ENCODE measurements at regions of chr2 and their contacts with region 1.

Region 1: DNA sequence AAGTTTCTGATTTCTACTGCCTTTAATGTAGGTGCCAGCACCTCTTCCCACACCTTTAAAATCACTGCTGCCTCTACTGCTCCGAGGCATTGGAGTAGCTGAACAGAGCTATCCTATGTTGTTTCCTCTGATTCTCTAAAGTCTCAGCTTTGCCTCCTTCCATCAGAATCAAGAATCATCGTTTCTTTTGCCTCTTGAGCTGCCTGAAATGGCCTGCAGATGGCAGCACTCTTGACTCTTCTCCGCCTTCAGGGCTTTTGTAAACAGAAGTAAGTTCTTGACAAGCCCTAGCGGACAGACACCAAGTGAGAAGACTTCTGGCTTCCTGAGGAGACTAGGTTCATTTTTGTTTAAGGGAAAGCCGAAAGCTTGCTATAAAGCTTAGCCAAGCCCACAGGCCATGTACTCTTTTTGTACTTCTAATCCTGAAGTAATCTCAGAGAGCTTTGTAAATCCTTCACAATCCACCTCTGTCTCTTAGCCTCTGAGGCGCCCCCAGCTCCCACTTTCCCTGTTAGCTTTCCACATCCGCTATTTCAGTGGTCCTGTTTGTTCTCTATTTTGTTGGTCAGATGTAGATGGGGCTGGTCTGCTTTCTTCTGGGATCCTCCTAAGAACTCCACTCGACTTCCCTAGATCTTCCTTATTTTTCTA is 48.4 kb downstream of the GTF3C3 start:
- DNase-seq: peak; percentile 26
- ATAC-seq: peak; percentile 86
- H3K4me3 Mint-ChIP-seq: no peak overlapping the region
- H3K27ac Mint-ChIP-seq: no peak overlapping the region
- H3K4me1 Mint-ChIP-seq: peaks cover 5% of the 10 kb centered on the region
- H3K27me3 Mint-ChIP-seq: no peaks in the 10 kb centered on the region
- CTCF ChIP-seq: no peak

Region 2: GRCh38 chr2:197777823-197778407 is 1026.8 kb after region 1 on chr2:
- CTCF ChIA-PET with region 1: interaction called, 4 read pairs
- POLR2A ChIA-PET with region 1: no interaction called
- intact Hi-C with region 1: loop called (anchors 1 kb)
- DNase-seq: no peak
- ATAC-seq: no peak
- H3K4me3 Mint-ChIP-seq: no peak overlapping the region
- H3K27ac Mint-ChIP-seq: no peak overlapping the region
- H3K4me1 Mint-ChIP-seq: no peaks in the 10 kb centered on the region
- H3K27me3 Mint-ChIP-seq: peaks cover 7% of the 10 kb centered on the region
- CTCF ChIP-seq: peak; percentile 23

Measured in activated B cell treated with CpG ODN at 0.5 μM for 24 hours (primary cell).